Caco-2 (cell line): ENCODE measurements at regions of chr6 and their contacts with region 1.

Region 1: GRCh38 chr6:155201461-155202226 is 62.2 kb upstream of the CLDN20 start:
- DNase-seq: peak in 1 of 2 experiments; percentile 46
- H3K4me3 ChIP-seq: no peak overlapping the region
- H3K4me3 Mint-ChIP-seq: no peak overlapping the region
- H3K27ac Mint-ChIP-seq: peak overlapping the region; percentile 47
- H3K4me1 ChIP-seq: peaks cover 25% of the 10 kb centered on the region
- H3K4me1 Mint-ChIP-seq: peaks cover 13% of the 10 kb centered on the region
- H3K27me3 ChIP-seq: no peaks in the 10 kb centered on the region
- H3K27me3 Mint-ChIP-seq: no peaks in the 10 kb centered on the region
- CTCF ChIP-seq: no peak

Region 2: DNA sequence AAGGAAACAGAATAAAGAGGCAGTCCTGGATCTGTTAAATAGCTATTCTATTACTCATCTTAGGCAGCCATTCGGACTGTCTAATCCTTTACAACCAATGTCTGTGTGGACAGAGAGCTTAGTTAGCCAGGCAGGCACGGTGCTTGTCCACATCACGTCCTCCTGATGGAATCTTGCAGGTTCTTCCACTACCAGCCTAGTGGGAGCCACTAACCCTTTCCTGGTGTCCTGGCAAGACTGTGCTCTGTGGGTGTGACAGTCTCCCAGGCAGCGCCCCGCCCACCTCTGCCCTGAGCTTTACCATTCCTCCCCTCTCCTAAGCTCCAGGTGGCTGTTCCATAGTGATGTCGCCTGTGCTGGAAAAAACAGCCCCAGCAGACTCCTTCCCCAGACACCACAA is 16.1 kb before region 1 on chr6:
- CTCF ChIA-PET with region 1: no interaction called
- POLR2A ChIA-PET with region 1: no interaction called
- intact Hi-C with region 1: loop called (anchors 1 kb)
- DNase-seq: peak; percentile 75 to 76
- H3K4me3 ChIP-seq: no peak overlapping the region
- H3K4me3 Mint-ChIP-seq: no peak overlapping the region
- H3K27ac Mint-ChIP-seq: peak overlapping the region; percentile 39
- H3K4me1 ChIP-seq: peaks cover 6% of the 10 kb centered on the region; the same call in 1 of the 2 replicates
- H3K4me1 Mint-ChIP-seq: peaks cover 13% of the 10 kb centered on the region
- H3K27me3 ChIP-seq: no peaks in the 10 kb centered on the region
- H3K27me3 Mint-ChIP-seq: no peaks in the 10 kb centered on the region
- CTCF ChIP-seq: no peak